ENCODE measurements at regions of chr7 and their contacts with region 1.

Region 1: DNA sequence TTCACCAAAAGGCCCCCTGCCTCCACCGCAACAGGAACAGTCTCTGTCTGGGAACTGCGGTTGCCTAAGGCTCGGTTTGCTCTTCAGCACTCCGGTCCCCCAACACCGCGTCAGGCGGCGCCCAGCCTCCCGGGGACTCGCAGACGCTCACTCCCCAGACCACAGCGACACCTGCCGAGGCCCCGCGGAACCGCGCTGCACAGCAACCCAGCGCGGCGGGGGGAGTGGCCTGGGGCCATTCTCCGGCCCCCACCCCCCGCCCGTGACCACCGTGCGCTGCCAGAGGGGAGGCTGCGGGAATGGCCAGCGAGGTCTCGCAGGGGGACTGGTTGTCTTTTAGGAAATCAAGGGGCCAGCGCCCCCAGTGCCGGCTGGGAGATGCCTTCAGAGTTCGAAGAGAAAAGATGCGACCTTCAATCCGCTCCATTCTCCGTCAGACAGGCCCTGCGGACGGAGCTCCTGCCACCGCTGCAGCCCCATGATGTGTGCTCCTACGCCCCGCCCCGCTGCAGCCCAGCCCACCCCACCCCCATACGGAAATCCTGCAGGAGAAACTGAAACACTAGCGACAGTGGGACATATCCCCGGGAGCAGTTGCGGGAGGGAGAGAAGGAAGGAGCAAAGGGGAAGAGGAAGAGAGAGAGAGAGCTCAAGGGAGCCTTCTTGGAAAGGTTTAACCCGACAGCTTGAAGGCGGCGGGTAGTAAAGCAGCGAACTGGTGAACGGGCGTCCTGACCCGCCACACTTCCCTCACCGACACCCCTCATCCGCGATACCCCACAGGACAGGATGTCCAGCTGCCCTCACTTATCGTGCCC is 137.4 kb upstream of the CDCA7L start:
- DNase-seq: peak; percentile 80 to 100
- H3K4me3 ChIP-seq: peak overlapping the region; percentile 45 to 75 (median 66)
- H3K27ac ChIP-seq: no peak overlapping the region
- H3K4me1 ChIP-seq: peaks cover 0 to 3% (median 3%) of the 10 kb centered on the region in 4 experiments; a peak in 4 of 7 replicates
- H3K27me3 ChIP-seq: peaks cover 0 to 7% (median 6%) of the 10 kb centered on the region in 4 experiments; a peak in 5 of 7 replicates
- CTCF ChIP-seq: peak; percentile 83 to 94 (median 91)
- EP300 ChIP-seq: peak; percentile 55 to 57; a peak in 2 of 3 replicates
- POLR2A ChIP-seq: no peak; a peak in 1 of 3 replicates
- RAD21 ChIP-seq: peak; percentile 87 to 94

Region 2: DNA sequence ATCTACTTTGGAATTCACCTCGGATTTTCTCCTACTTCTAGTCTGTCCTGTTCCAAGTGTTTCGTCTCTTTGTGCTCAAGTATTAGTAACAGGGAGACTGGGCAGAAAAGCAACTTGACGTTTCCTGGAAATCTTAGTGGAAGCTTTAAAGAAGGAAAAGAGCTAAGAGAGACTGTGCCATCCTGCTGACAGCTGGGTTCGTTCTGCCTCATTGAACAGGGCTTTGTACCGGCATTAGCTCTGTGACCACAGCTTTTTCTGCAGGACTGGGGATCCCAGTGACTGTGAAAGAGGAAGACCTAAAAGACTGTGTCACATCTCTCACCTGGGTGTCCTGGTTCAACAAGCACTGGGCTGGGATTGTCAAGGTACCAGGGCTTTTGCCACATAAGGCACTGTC is 66.6 kb before region 1 on chr7:
- CTCF ChIA-PET with region 1: interaction called, 10 read pairs
- POLR2A ChIA-PET with region 1: no interaction called
- DNase-seq: no peak
- H3K4me3 ChIP-seq: no peak overlapping the region
- H3K27ac ChIP-seq: no peak overlapping the region
- H3K4me1 ChIP-seq: no peaks in the 10 kb centered on the region
- H3K27me3 ChIP-seq: no peaks in the 10 kb centered on the region; a peak in 1 of 7 replicates
- CTCF ChIP-seq: no peak
- EP300 ChIP-seq: no peak
- POLR2A ChIP-seq: no peak
- RAD21 ChIP-seq: no peak

Region 3: GRCh38 chr7:22066484-22066883 is 16.6 kb before region 1 on chr7:
- CTCF ChIA-PET with region 1: interaction called, 11 read pairs
- POLR2A ChIA-PET with region 1: interaction called, 3 read pairs
- DNase-seq: no peak
- H3K4me3 ChIP-seq: no peak overlapping the region; a peak in 1 of 8 replicates
- H3K27ac ChIP-seq: no peak overlapping the region
- H3K4me1 ChIP-seq: peaks cover 0 to 7% (median 3%) of the 10 kb centered on the region in 4 experiments; a peak in 2 of 7 replicates
- H3K27me3 ChIP-seq: no peaks in the 10 kb centered on the region
- CTCF ChIP-seq: no peak
- EP300 ChIP-seq: no peak
- POLR2A ChIP-seq: no peak
- RAD21 ChIP-seq: no peak

Region 4: GRCh38 chr7:22094413-22095342 is 11.6 kb after region 1 on chr7:
- CTCF ChIA-PET with region 1: interaction called, 19 read pairs
- POLR2A ChIA-PET with region 1: interaction called, 4 read pairs
- DNase-seq: no peak
- H3K4me3 ChIP-seq: no peak overlapping the region
- H3K27ac ChIP-seq: no peak overlapping the region
- H3K4me1 ChIP-seq: peaks cover 0 to 4% (median 1%) of the 10 kb centered on the region in 4 experiments; a peak in 2 of 7 replicates
- H3K27me3 ChIP-seq: no peaks in the 10 kb centered on the region
- CTCF ChIP-seq: peak; percentile 25 to 63 (median 35); a peak in 3 of 4 replicates
- EP300 ChIP-seq: no peak
- POLR2A ChIP-seq: no peak
- RAD21 ChIP-seq: no peak; a peak in 1 of 4 replicates

Region 5: GRCh38 chr7:22103255-22103969 is 20.3 kb after region 1 on chr7:
- CTCF ChIA-PET with region 1: interaction called, 16 read pairs
- POLR2A ChIA-PET with region 1: interaction called, 3 read pairs
- DNase-seq: peak in 1 of 2 experiments; percentile 63
- H3K4me3 ChIP-seq: no peak overlapping the region
- H3K27ac ChIP-seq: no peak overlapping the region
- H3K4me1 ChIP-seq: no peaks in the 10 kb centered on the region
- H3K27me3 ChIP-seq: no peaks in the 10 kb centered on the region
- CTCF ChIP-seq: peak; percentile 59 to 75 (median 66)
- EP300 ChIP-seq: no peak
- POLR2A ChIP-seq: no peak
- RAD21 ChIP-seq: peak; percentile 86 to 87

Region 6: GRCh38 chr7:22255834-22256233 is 172.7 kb after region 1 on chr7:
- CTCF ChIA-PET with region 1: no interaction called
- POLR2A ChIA-PET with region 1: no interaction called
- DNase-seq: no peak
- H3K4me3 ChIP-seq: no peak overlapping the region
- H3K27ac ChIP-seq: no peak overlapping the region
- H3K4me1 ChIP-seq: peaks cover 2 to 20% (median 12%) of the 10 kb centered on the region in 4 experiments; a peak in 6 of 7 replicates
- H3K27me3 ChIP-seq: no peaks in the 10 kb centered on the region
- CTCF ChIP-seq: peak in 1 of 3 experiments; percentile 12; a peak in 1 of 4 replicates
- EP300 ChIP-seq: no peak
- POLR2A ChIP-seq: no peak
- RAD21 ChIP-seq: peak in 1 of 2 experiments; percentile 15; a peak in 1 of 4 replicates